Dendritic cell treated with granulocyte-macrophage colony-stimulating factor and Interleukin-4, amounts not matched to agents 40 ng/mL and 50 ng/mL, for 4 days (primary cell): ENCODE measurements at regions of chr19 and their contacts with region 1.

Region 1: GRCh38 chr19:1513499-1514294 is 878 bp upstream of the ADAMTSL5 start:
- H3K4me3 Mint-ChIP-seq: peak overlapping the region; percentile 30
- H3K27ac Mint-ChIP-seq: no peak overlapping the region
- H3K4me1 Mint-ChIP-seq: peaks cover 8% of the 10 kb centered on the region
- H3K27me3 Mint-ChIP-seq: peaks cover 76% of the 10 kb centered on the region

Region 2: DNA sequence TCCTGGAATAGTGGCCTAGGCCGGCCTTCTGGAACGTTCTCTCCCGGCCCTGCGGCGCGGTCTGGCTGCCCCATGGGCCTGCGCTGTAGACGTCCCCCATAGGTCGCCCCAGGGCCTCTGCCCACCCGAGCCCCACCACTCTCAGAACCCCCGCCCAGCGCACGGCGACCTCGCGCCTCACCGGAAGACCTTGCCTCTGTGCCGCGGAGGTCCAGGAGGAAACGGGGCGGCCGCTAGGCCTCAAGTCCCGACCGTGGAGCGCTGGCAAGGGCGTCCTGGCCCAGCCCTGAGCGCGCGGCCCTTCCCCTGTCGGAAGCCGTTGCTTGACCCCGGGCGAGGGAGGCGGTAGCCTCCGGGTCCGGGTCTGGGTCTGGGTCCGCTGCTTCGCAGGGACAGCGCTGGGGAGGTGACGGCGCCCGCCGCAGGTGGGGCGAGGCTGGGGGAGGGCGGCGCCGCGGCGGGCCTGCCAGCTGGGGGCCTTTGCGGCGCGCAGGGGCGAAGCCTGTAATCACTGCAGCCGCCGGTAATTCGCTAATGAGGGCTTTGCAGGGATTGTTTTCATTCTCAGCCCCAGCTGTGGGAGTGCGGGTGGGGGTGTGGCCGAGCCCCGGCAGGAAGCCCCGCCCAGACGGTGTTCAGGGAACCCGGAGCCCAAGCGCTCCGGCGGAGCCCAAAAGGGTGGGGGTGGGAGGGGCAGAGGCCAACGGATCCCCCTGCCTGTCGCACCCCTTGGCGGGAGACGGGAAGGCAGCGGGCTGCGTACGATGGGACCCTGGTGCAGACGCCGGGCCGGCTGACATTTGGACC is 43.3 kb before region 1 on chr19:
- intact Hi-C with region 1: loop called (anchors 5 kb)
- H3K4me3 Mint-ChIP-seq: peak overlapping the region; percentile 75
- H3K27ac Mint-ChIP-seq: peak overlapping the region; percentile 44
- H3K4me1 Mint-ChIP-seq: peaks cover 35% of the 10 kb centered on the region
- H3K27me3 Mint-ChIP-seq: peaks cover 75% of the 10 kb centered on the region

Region 3: GRCh38 chr19:1490311-1491113 is 23.2 kb before region 1 on chr19 and contains the start of gene PCSK4:
- intact Hi-C with region 1: no loop called
- H3K4me3 Mint-ChIP-seq: peak within 1 kb of the TSS; percentile 78
- H3K27ac Mint-ChIP-seq: peak within 1 kb of the TSS; percentile 77
- H3K4me1 Mint-ChIP-seq: peaks cover 35% of the 10 kb centered on the region
- H3K27me3 Mint-ChIP-seq: peaks cover 38% of the 10 kb centered on the region